Activated B cell treated with CpG ODN at 0.5 μM for 24 hours (primary cell): ENCODE measurements at regions of chr16 and their contacts with region 1.

Region 1: DNA sequence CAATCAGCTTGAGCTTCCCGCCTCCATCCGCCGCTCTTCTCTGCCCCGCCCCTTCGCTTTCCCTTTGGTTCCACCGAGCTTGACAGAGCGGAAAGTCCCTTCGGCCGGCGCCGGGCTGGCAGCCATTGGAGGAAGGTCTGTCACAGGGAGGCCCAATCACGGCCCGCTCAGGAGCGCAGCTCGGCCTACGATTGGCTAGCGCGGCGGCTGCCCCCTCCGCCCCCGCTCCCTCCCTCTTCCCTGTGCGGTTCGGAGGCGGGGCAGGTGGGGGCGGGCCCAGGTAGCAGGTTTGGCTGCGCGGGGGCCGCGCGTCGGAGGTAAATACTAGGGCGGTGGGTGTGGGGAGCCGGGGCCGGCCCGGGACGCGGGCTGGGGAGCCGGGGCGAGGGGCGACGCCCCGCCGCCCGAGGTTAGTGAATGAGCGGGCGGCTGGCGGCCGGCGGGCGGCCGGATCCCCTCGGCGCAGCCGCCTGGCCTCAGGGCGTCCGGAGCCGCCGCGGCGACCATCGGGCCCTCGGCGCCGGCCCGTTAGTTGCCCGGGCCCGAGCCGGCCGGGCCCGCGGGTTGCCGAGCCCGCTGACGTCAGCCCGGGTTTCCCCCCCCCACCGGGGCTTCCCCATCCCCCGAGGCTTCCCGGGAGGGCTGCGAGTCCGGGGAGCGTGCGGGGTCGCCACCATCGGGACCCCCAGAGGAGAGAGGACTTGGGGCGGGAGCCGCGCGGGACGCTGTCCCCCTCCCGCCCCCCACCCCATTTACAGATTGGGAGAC is at the start of gene CYLD:
- DNase-seq: peak; percentile 96
- ATAC-seq: peak; percentile 87
- H3K4me3 Mint-ChIP-seq: peak within 1 kb of the TSS; percentile 91
- H3K27ac Mint-ChIP-seq: peak within 1 kb of the TSS; percentile 96
- H3K4me1 Mint-ChIP-seq: peaks cover 58% of the 10 kb centered on the region
- H3K27me3 Mint-ChIP-seq: no peaks in the 10 kb centered on the region
- CTCF ChIP-seq: no peak
- total RNA-seq, gene CYLD: 116 and 122 TPM in 2 replicates

Region 2: GRCh38 chr16:50065624-50066481 is 676.1 kb before region 1 on chr16 and contains the start of gene HEATR3:
- CTCF ChIA-PET with region 1: no interaction called
- POLR2A ChIA-PET with region 1: interaction called, 9 read pairs
- intact Hi-C with region 1: loop called (anchors 2 kb)
- DNase-seq: peak; percentile 92
- ATAC-seq: peak; percentile 85
- H3K4me3 Mint-ChIP-seq: peak within 1 kb of the TSS; percentile 90
- H3K27ac Mint-ChIP-seq: peak within 1 kb of the TSS; percentile 90
- H3K4me1 Mint-ChIP-seq: peaks cover 31% of the 10 kb centered on the region
- H3K27me3 Mint-ChIP-seq: no peaks in the 10 kb centered on the region
- CTCF ChIP-seq: no peak
- total RNA-seq, gene HEATR3: 16.1 and 17.8 TPM in 2 replicates

Region 3: DNA sequence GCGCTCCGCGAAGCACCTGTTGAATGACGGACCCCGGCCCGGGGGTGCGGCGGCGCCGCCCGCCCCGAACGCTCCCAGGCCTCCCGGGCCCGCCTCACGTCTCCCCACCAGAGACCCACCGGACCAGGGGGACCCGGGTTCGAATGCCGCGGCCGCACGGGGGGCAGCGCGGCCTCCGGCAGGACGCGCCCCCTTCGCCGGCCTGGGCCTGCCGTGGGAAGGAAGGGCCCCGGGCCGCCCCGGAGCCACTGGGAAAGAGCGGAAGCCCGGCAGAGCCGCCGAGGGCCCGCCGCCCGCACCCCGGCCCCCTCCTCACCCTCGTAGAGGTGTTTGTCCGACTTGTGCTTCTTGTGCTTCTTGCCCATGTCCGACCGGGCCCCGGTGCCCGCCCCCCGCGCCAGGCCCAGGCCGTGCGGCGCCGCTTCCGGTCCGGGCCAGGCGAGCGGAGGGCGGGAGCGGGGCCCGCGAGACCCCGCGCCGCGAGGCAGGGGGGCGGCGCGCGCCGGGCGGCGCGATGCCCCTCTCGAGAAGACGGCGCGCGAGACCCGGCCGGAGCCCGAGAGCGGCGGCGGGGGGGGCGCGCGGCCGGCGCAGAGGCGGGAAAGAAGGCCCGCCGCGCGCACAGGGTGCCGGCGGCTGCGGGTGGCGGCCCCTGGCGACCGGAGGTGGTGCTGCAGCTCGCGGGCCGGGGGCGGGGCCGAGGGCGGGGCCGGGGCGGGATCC is 373.4 kb before region 1 on chr16 and contains the start of gene BRD7:
- CTCF ChIA-PET with region 1: interaction called, 3 read pairs
- POLR2A ChIA-PET with region 1: interaction called, 3 read pairs
- intact Hi-C with region 1: loop called (anchors 1 kb)
- DNase-seq: peak; percentile 79
- ATAC-seq: peak; percentile 89
- H3K4me3 Mint-ChIP-seq: peak within 1 kb of the TSS; percentile 92
- H3K27ac Mint-ChIP-seq: peak within 1 kb of the TSS; percentile 90
- H3K4me1 Mint-ChIP-seq: peaks cover 47% of the 10 kb centered on the region
- H3K27me3 Mint-ChIP-seq: peaks cover 4% of the 10 kb centered on the region
- CTCF ChIP-seq: no peak
- total RNA-seq, gene BRD7: 60.3 and 65.2 TPM in 2 replicates

Region 4: DNA sequence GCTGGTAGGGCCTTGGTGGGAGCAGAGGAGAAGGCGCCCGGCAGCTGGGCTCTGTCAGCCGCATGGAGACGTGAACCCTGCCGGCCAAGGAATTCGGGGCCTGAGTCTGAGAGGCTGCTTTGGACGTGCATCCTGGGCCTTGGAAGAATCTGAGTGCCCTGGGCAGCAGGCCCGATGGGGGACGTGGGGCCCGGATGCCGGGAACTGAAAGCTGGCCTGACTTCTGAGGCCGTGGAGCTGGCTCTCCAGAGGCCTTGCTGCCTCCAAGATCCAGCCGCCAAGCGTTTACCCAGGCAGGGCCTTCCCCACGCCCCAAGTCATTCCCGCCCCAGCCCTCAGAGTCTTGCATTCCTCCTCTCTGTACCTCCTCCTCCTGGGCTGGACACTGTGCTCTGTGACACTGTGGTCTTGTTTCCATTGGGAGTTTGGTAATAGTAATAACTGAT is 156.6 kb before region 1 on chr16:
- CTCF ChIA-PET with region 1: no interaction called
- POLR2A ChIA-PET with region 1: interaction called, 4 read pairs
- intact Hi-C with region 1: loop called (anchors 2 kb)
- DNase-seq: no peak
- ATAC-seq: no peak
- H3K4me3 Mint-ChIP-seq: no peak overlapping the region
- H3K27ac Mint-ChIP-seq: no peak overlapping the region
- H3K4me1 Mint-ChIP-seq: peaks cover 30% of the 10 kb centered on the region
- H3K27me3 Mint-ChIP-seq: no peaks in the 10 kb centered on the region
- CTCF ChIP-seq: no peak

Region 5: GRCh38 chr16:50681021-50681885 is 60.7 kb before region 1 on chr16 and contains the start of gene SNX20:
- CTCF ChIA-PET with region 1: interaction called, 10 read pairs
- POLR2A ChIA-PET with region 1: interaction called, 34 read pairs
- intact Hi-C with region 1: loop called (anchors 1 kb)
- DNase-seq: peak; percentile 49
- ATAC-seq: peak; percentile 78
- H3K4me3 Mint-ChIP-seq: peak within 1 kb of the TSS; percentile 86
- H3K27ac Mint-ChIP-seq: peak within 1 kb of the TSS; percentile 93
- H3K4me1 Mint-ChIP-seq: peaks cover 79% of the 10 kb centered on the region
- H3K27me3 Mint-ChIP-seq: no peaks in the 10 kb centered on the region
- CTCF ChIP-seq: no peak
- total RNA-seq, gene SNX20: 33.1 and 34.5 TPM in 2 replicates

Region 6: DNA sequence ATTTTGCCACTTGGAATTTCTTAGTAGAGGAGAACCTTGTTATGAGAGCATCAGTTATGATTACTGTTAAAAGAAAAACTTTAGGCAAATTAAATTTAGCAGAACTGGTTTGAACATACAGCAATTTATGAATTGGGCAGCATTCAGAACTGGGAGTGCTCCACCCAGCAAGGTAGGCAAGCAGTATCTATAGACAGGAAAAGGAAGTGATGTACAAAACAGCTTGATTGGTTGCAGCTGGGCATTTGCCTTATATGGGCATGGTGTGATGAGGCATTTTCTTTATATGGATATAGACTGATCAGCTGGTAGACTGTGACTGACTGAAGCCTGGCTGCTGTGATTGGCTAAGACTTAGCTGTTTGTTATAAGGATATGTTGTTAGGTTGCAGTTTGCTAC is 17.7 kb before region 1 on chr16:
- CTCF ChIA-PET with region 1: no interaction called
- POLR2A ChIA-PET with region 1: no interaction called
- intact Hi-C with region 1: no loop called
- DNase-seq: no peak
- ATAC-seq: no peak
- H3K4me3 Mint-ChIP-seq: no peak overlapping the region
- H3K27ac Mint-ChIP-seq: no peak overlapping the region
- H3K4me1 Mint-ChIP-seq: no peaks in the 10 kb centered on the region
- H3K27me3 Mint-ChIP-seq: no peaks in the 10 kb centered on the region
- CTCF ChIP-seq: no peak